Psoas muscle (tissue), 8 donors: ENCODE measurements at regions of chr17 and their contacts with region 1.

Region 1: GRCh38 chr17:17966399-17966798 is 5.8 kb downstream of the TOM1L2 start:
- DNase-seq: no peak
- ATAC-seq: no peak
- H3K4me3 ChIP-seq: no peak overlapping the region
- H3K27ac ChIP-seq: peak overlapping the region; percentile 60
- H3K4me1 ChIP-seq: peaks cover 50% of the 10 kb centered on the region
- H3K27me3 ChIP-seq: no peaks in the 10 kb centered on the region
- CTCF ChIP-seq: no peak

Region 2: DNA sequence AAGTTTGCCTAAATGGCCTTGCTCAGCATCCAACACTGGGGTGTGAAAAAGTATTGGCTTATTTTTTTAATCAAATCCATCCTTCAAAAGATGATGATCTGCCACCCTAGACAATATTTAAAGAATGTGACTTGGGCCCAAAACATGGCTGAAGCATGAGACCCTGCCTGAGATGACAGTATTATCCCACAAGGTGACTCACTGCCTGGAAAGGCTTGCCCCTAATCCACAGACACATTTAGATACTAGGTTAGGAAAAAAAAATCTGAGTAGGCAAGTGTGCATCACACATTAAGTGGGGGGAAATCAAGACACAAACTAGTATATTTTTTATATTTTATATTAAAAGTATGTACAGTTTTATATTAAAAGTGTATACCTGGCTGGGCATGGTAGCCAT is 32.6 kb before region 1 on chr17:
- intact Hi-C with region 1: loop called in 1 of 2 experiments (anchors 5 kb)
- DNase-seq: no peak
- ATAC-seq: peak; percentile 31 to 53 (median 42)
- H3K4me3 ChIP-seq: no peak overlapping the region
- H3K27ac ChIP-seq: peak overlapping the region; percentile 53
- H3K4me1 ChIP-seq: peaks cover 62% of the 10 kb centered on the region
- H3K27me3 ChIP-seq: no peaks in the 10 kb centered on the region
- CTCF ChIP-seq: no peak